ENCODE measurements at regions of chr2 and their contacts with region 1.

Region 1: GRCh38 chr2:46117379-46117778 is 179.8 kb upstream of the EPAS1 start:
- DNase-seq: no peak
- ATAC-seq: peak in 1 of 8 donors; percentile 66
- H3K4me3 ChIP-seq: no peak overlapping the region
- H3K27ac ChIP-seq: peak overlapping the region in 9 of 10 donors; percentile 56 to 89 (median 84)
- H3K4me1 ChIP-seq: peaks cover 6 to 77% (median 54%) of the 10 kb centered on the region in 9 donors
- H3K27me3 ChIP-seq: no peaks in the 10 kb centered on the region
- CTCF ChIP-seq: no peak

Region 2: DNA sequence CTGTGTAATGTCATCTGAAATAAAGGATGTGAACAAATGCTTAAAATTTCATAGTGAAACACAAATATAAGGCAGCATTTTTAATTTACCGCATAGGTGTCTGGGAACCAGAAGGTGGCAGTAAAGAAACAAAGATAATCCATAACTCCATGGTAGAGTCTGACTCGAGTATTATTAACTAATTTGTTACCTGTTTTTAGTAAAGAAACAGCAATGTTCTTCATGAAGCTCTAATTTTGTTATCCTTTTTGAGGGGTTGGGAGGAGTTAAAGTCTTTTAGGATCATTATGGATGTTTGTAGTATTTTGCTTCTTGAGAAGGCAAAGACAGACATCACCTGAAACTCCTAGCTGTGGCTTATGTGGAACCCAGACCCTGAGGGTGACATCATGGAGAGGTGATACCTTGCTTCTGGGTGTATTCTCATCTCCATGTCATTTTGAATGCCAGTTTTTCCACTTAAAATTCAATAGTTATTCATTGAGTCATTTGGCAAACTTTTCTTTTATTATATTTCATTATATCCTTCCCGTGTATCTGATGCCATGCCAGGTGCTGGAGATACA is 106.4 kb before region 1 on chr2:
- intact Hi-C with region 1: loop called in 1 of 10 experiments (anchors 10 kb)
- DNase-seq: no peak
- ATAC-seq: peak in 5 of 8 donors; percentile 45 to 77 (median 60)
- H3K4me3 ChIP-seq: no peak overlapping the region
- H3K27ac ChIP-seq: peak overlapping the region in 2 of 10 donors; percentile 19 to 22
- H3K4me1 ChIP-seq: peaks cover 0 to 43% (median 19%) of the 10 kb centered on the region in 9 donors
- H3K27me3 ChIP-seq: no peaks in the 10 kb centered on the region
- CTCF ChIP-seq: peak; percentile 21 to 81 (median 72)

Region 3: GRCh38 chr2:46067851-46068305 is 49.5 kb before region 1 on chr2:
- intact Hi-C with region 1: loop called in 2 of 10 experiments (anchors 5 to 10 kb)
- DNase-seq: no peak
- ATAC-seq: peak; percentile 37 to 80 (median 72)
- H3K4me3 ChIP-seq: no peak overlapping the region
- H3K27ac ChIP-seq: peak overlapping the region in 8 of 10 donors; percentile 19 to 83 (median 52)
- H3K4me1 ChIP-seq: peaks cover 2 to 61% (median 29%) of the 10 kb centered on the region in 9 donors
- H3K27me3 ChIP-seq: no peaks in the 10 kb centered on the region
- CTCF ChIP-seq: no peak

Region 4: GRCh38 chr2:46179037-46179652 is 61.8 kb after region 1 on chr2:
- intact Hi-C with region 1: loop called in 1 of 10 experiments (anchors 2 kb)
- DNase-seq: peak; percentile 64 to 82
- ATAC-seq: peak; percentile 83 to 95 (median 93)
- H3K4me3 ChIP-seq: no peak overlapping the region
- H3K27ac ChIP-seq: peak overlapping the region; percentile 51 to 81 (median 75)
- H3K4me1 ChIP-seq: peaks cover 2 to 29% (median 14%) of the 10 kb centered on the region in 9 donors
- H3K27me3 ChIP-seq: no peaks in the 10 kb centered on the region
- CTCF ChIP-seq: no peak

Measured in heart right ventricle (tissue), 16 donors.